Activated T-helper 2 cell treated with anti-CD3 and anti-CD28 coated beads, Interferon-gamma antibody, Interleukin-2, Interleukin-4, amounts not matched to agents 10 μg/mL and 5 μg/mL and 100 μg/mL, durations not matched to agents 14 hours and 24 hours and 36 hours (primary cell): ENCODE measurements at regions of chr14 and their contacts with region 1.

Region 1: GRCh38 chr14:21525962-21526671 is at the start of gene SALL2:
- DNase-seq: peak; percentile 39
- H3K4me3 Mint-ChIP-seq: peak within 1 kb of the TSS; percentile 89
- H3K27ac Mint-ChIP-seq: peak within 1 kb of the TSS; percentile 56
- H3K4me1 Mint-ChIP-seq: peaks cover 13% of the 10 kb centered on the region
- H3K27me3 Mint-ChIP-seq: peaks cover 14% of the 10 kb centered on the region
- total RNA-seq, gene SALL2: 2.6 and 2.7 TPM in 2 replicates

Region 2: GRCh38 chr14:21498553-21499526 is 27.3 kb before region 1 on chr14:
- intact Hi-C with region 1: no loop called
- DNase-seq: no peak
- H3K4me3 Mint-ChIP-seq: no peak overlapping the region
- H3K27ac Mint-ChIP-seq: peak overlapping the region; percentile 2
- H3K4me1 Mint-ChIP-seq: peaks cover 21% of the 10 kb centered on the region
- H3K27me3 Mint-ChIP-seq: no peaks in the 10 kb centered on the region

Region 3: GRCh38 chr14:21510735-21511657 is 15.1 kb before region 1 on chr14 and contains the start of gene METTL3:
- intact Hi-C with region 1: loop called (anchors 1 kb)
- DNase-seq: peak; percentile 91
- H3K4me3 Mint-ChIP-seq: peak within 1 kb of the TSS; percentile 88
- H3K27ac Mint-ChIP-seq: peak within 1 kb of the TSS; percentile 97
- H3K4me1 Mint-ChIP-seq: peaks cover 28% of the 10 kb centered on the region
- H3K27me3 Mint-ChIP-seq: peaks cover 5% of the 10 kb centered on the region
- total RNA-seq, gene METTL3: 76.7 and 80.5 TPM in 2 replicates